Common myeloid progenitor, CD34-positive (primary cell): ENCODE measurements at regions of chr22 and their contacts with region 1.

Region 1: DNA sequence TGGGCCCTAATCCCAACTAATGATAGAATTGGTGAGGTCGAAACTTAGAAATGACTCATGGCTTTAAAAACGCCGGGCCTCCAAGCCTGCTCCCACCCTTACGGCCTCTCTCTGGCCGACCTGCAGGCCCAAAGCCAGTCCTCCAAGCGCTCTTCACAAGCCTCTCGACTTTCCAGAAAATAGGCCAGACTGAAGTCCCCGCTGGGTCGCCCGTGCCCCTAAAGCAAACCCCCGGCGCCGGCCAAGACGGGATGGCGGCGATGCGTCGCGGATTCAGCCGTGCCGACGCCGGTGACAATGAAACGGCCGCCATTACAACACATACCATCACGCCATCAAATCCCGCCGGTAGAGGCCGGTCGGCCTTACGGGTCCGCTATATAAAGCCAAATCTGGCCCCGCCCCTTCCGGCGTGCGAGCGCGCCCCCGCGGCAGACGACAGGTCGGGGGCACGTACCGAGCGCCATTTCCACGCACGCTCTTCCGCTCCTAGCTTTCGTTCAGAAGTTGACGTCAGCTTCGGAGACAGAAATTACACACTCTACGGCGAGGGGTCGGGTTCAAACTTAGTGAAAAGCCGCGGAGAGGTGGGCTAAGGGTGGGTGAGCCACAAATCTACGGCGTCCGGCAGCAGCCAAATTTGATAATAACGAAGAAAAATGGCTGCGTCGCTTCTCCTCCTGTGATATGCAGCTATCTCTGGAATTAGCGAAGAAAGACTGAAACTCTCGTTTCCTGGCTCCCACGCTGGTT is at the start of gene RPL3:
- DNase-seq: peak; percentile 100
- H3K4me3 ChIP-seq: peak within 1 kb of the TSS; percentile 87 to 100 (median 97)
- H3K27ac ChIP-seq: peak within 1 kb of the TSS; percentile 85 to 96
- H3K4me1 ChIP-seq: peaks cover 14 to 42% (median 35%) of the 10 kb centered on the region in 4 experiments
- H3K27me3 ChIP-seq: no peaks in the 10 kb centered on the region

Region 2: GRCh38 chr22:39170825-39171622 is 148.4 kb before region 1 on chr22:
- CTCF ChIA-PET with region 1: interaction called, 112 read pairs
- POLR2A ChIA-PET with region 1: interaction called, 4 read pairs
- DNase-seq: peak; percentile 64 to 73 (median 71)
- H3K4me3 ChIP-seq: peak overlapping the region in 3 of 7 experiments; percentile 19 to 57 (median 33)
- H3K27ac ChIP-seq: no peak overlapping the region
- H3K4me1 ChIP-seq: peaks cover 3 to 37% (median 27%) of the 10 kb centered on the region in 4 experiments
- H3K27me3 ChIP-seq: peaks cover 0 to 9% (median 4%) of the 10 kb centered on the region in 5 experiments

Region 3: DNA sequence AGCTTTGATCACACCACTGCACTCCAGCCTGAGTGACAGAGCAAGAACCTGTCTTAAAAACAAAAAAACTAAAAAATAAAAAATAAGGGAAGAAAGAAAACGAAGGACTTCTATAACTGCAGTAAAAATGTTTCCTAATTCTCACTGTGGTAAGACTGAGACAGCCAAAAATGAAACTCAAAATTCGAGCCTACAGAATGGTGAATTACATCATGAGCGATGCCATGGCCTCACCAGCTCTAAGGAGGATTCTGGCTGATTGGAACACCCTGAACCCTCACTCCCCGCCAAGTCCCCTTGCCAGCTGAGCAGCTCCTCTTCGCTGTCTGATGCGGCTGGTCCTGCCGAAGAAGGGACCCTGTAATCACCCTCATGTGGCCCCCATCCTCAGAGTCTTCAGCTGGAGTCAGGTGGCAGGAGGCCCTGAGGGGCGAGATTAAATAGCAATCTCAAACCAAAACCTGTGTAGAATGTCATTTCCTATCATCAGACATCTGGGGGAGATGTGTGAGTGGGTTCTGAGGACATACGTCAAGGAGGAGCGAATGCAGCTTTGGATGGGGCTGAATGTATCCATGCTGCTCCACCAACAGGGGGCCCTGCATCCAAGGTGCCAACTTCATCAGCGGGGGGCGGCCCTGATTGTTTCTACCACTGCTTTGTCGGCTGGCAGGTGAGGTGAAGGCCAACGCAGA is 103.9 kb before region 1 on chr22:
- CTCF ChIA-PET with region 1: interaction called, 14 read pairs
- POLR2A ChIA-PET with region 1: interaction called, 3 read pairs
- DNase-seq: peak; percentile 62 to 82 (median 77)
- H3K4me3 ChIP-seq: no peak overlapping the region
- H3K27ac ChIP-seq: no peak overlapping the region
- H3K4me1 ChIP-seq: peaks cover 0 to 6% (median 0%) of the 10 kb centered on the region in 4 experiments
- H3K27me3 ChIP-seq: peaks cover 0 to 47% (median 18%) of the 10 kb centered on the region in 5 experiments

Region 4: GRCh38 chr22:39332441-39333064 is 13.1 kb after region 1 on chr22:
- CTCF ChIA-PET with region 1: interaction called, 12 read pairs
- POLR2A ChIA-PET with region 1: interaction called, 20 read pairs
- DNase-seq: peak in 2 of 3 donors; percentile 52 to 64
- H3K4me3 ChIP-seq: no peak overlapping the region
- H3K27ac ChIP-seq: no peak overlapping the region
- H3K4me1 ChIP-seq: peaks cover 0 to 25% (median 15%) of the 10 kb centered on the region in 4 experiments
- H3K27me3 ChIP-seq: no peaks in the 10 kb centered on the region

Region 5: DNA sequence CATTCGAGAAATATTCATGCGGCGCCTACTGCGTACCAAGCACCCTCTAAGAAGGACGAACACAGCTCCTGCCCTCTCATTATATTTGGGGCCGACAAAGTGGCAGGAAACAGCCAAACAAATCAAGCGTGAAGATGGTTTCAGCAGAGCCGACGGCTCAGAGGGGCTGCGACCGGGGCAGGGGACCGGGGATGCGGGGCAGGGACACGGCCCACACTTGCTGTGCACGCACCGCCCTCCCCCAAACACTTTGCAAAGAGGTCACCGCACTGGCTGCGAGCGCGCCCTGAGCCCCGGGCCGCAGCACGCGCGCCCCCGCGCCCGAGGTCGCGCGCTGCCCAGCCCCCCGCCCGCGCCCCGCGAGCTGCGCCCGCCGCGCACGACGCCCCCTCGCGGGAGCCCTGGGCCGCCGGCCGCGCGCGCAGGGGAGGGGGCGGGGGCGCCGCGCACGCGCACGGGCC is 30.1 kb after region 1 on chr22:
- CTCF ChIA-PET with region 1: interaction called, 17 read pairs
- POLR2A ChIA-PET with region 1: interaction called, 11 read pairs
- DNase-seq: peak; percentile 53 to 85 (median 78)
- H3K4me3 ChIP-seq: peak overlapping the region; percentile 56 to 90 (median 77)
- H3K27ac ChIP-seq: peak overlapping the region; percentile 62 to 82
- H3K4me1 ChIP-seq: peaks cover 12 to 43% (median 37%) of the 10 kb centered on the region in 4 experiments
- H3K27me3 ChIP-seq: no peaks in the 10 kb centered on the region

Region 6: DNA sequence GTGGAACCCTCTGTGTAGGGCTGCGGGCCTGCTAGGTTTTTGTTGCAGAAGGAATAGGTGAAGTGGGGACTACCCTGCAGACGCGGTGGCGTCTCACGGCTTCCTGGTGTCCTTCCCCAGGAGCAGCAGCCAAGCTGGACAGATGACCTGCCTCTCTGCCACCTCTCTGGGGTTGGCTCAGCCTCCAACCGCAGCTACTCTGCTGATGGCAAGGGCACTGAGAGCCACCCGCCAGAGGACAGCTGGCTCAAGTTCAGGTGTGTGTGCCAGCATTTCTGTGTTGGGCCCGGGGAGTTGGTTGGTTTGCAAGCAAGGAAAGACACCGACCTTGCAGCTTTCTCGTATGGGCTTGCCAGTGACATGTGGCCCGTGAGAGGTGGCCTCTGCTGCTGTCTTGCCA is 95.4 kb after region 1 on chr22:
- CTCF ChIA-PET with region 1: no interaction called
- POLR2A ChIA-PET with region 1: no interaction called
- DNase-seq: no peak
- H3K4me3 ChIP-seq: no peak overlapping the region
- H3K27ac ChIP-seq: no peak overlapping the region
- H3K4me1 ChIP-seq: peaks cover 6 to 48% (median 24%) of the 10 kb centered on the region in 4 experiments
- H3K27me3 ChIP-seq: no peaks in the 10 kb centered on the region